PC-9 (cell line): ENCODE measurements at regions of chr18 and their contacts with region 1.

Region 1: GRCh38 chr18:136433-136832 is 21.9 kb upstream of the USP14 start:
- DNase-seq: no peak
- H3K4me3 ChIP-seq: no peak overlapping the region
- H3K27ac ChIP-seq: no peak overlapping the region
- H3K4me1 ChIP-seq: no peaks in the 10 kb centered on the region
- H3K27me3 ChIP-seq: no peaks in the 10 kb centered on the region
- CTCF ChIP-seq: no peak

Region 2: GRCh38 chr18:199768-200167 is 63.3 kb after region 1 on chr18:
- CTCF ChIA-PET with region 1: no interaction called
- POLR2A ChIA-PET with region 1: interaction called, 14 read pairs
- intact Hi-C with region 1: no loop called
- DNase-seq: no peak
- H3K4me3 ChIP-seq: no peak overlapping the region
- H3K27ac ChIP-seq: no peak overlapping the region
- H3K4me1 ChIP-seq: no peaks in the 10 kb centered on the region
- H3K27me3 ChIP-seq: no peaks in the 10 kb centered on the region
- CTCF ChIP-seq: no peak